GM13976 (cell line): ENCODE measurements at regions of chr20 and their contacts with region 1.

Region 1: GRCh38 chr20:9407805-9408421 is 106.5 kb upstream of the LAMP5 start:
- DNase-seq: peak; percentile 55
- CTCF ChIP-seq: peak; percentile 74

Region 2: GRCh38 chr20:9609887-9610502 is 202.1 kb after region 1 on chr20:
- in situ Hi-C with region 1: loop called (anchors 5 kb)
- DNase-seq: peak; percentile 41
- CTCF ChIP-seq: peak; percentile 52

Region 3: DNA sequence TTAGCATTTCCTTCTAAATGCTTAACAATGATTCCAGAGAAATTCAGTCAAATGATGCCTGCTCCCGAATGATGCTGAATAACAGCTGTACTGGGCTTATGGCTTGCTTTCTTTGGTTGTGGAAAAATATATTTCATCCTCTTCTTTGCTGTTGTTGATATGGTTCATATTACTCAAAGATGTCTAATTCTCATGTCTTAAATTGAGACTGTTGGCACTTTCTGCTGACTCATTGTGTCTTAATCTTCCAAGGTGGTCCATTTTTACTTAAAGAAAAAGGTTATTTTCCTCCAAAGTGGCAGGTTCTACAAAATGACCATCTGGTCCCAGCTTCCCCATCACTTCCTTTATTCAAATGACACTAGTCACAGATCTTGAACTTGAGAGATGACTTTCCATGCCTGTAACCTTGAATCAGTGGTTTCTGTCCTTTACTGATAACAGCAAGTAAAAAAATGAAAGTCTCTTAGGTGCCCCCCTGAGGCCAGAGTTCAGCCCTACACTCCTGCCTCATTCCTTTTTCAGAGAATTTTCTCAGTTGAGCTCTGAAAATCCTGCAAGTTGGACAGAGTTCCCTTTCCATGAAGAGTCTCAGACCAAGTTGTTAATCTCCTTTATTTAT is 817.6 kb after region 1 on chr20:
- in situ Hi-C with region 1: no loop called
- DNase-seq: no peak
- CTCF ChIP-seq: no peak